ENCODE measurements at regions of chr12 and their contacts with region 1.

Region 1: GRCh38 chr12:3777206-3777809 is 24.4 kb upstream of the CRACR2A start:
- DNase-seq: peak; percentile 61
- H3K4me3 ChIP-seq: no peak overlapping the region
- H3K27ac ChIP-seq: no peak overlapping the region
- H3K4me1 ChIP-seq: no peaks in the 10 kb centered on the region
- H3K27me3 ChIP-seq: peaks cover 12% of the 10 kb centered on the region; the same call in 1 of the 2 replicates
- CTCF ChIP-seq: peak; percentile 81
- EP300 ChIP-seq: no peak
- RAD21 ChIP-seq: peak; percentile 85

Region 2: DNA sequence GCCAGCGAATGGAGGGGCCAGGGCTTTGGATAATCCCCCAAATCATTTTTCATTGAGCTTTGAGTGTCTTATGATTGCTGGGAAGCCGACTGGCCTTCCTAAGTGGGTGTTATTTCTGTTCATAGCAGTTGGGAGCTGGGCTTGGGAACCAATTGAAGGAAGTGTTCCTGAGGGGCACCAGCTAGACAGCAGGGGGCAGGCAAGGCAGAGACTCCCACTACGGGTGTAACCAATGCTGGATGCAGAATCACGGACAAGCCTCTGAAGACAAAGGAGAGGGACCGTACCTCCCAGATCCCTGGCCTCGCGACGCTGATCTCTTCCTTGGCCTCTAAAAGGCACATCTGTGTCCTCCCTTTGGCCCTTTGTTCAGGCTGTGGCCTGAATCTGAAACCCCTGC is 435.3 kb before region 1 on chr12:
- CTCF ChIA-PET with region 1: interaction called, 19 read pairs
- POLR2A ChIA-PET with region 1: no interaction called
- DNase-seq: peak; percentile 82
- H3K4me3 ChIP-seq: peak overlapping the region in 1 of 2 experiments; percentile 32; a peak in 1 of 4 replicates
- H3K27ac ChIP-seq: no peak overlapping the region
- H3K4me1 ChIP-seq: peaks cover 0 to 2% of the 10 kb centered on the region in 2 experiments; a peak in 1 of 4 replicates
- H3K27me3 ChIP-seq: peaks cover 17% of the 10 kb centered on the region; the same call in 1 of the 2 replicates
- CTCF ChIP-seq: peak; percentile 48
- EP300 ChIP-seq: no peak
- RAD21 ChIP-seq: peak; percentile 71

Region 3: DNA sequence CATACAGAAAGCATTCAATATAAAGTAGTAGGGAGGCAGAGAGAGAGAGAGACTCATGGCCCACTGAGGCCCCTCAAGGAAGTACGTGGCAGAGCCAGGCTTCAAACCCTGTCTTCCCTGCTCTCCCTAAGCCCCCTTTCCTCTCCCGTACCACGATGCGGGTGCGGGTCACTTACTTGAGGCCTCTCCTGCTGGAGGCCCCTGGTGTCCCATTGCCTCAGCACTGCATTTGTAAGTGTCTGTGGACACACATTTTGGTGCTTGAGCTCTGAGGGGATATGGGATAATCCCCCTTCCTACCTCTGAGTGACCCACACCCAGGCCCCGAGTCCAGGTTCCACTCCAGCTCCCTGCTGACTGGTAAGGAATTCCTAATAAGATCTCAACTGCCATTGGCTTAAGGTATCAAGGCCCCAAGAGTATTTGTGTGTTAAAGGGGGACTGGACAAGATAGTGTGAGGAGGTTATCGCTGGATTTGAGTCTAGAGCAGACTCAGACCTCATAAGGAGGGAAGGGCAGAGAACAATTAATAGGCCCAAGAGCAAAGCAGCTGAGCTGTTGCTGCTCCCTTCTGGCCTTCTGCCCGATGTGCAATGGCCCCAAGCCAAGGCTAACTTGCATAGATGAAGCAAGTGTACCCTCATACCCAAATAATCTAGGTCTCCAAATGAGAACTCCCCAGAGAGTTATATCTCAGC is 96.3 kb before region 1 on chr12:
- CTCF ChIA-PET with region 1: interaction called, 12 read pairs
- POLR2A ChIA-PET with region 1: no interaction called
- DNase-seq: peak; percentile 51
- H3K4me3 ChIP-seq: no peak overlapping the region
- H3K27ac ChIP-seq: no peak overlapping the region
- H3K4me1 ChIP-seq: peaks cover 0 to 29% of the 10 kb centered on the region in 2 experiments; a peak in 2 of 4 replicates
- H3K27me3 ChIP-seq: no peaks in the 10 kb centered on the region; the same call in 1 of the 2 replicates
- CTCF ChIP-seq: peak; percentile 42
- EP300 ChIP-seq: no peak
- RAD21 ChIP-seq: peak; percentile 72

Region 4: GRCh38 chr12:3752741-3753486 is 24.4 kb before region 1 on chr12 and contains the start of gene CRACR2A:
- CTCF ChIA-PET with region 1: interaction called, 11 read pairs
- POLR2A ChIA-PET with region 1: no interaction called
- DNase-seq: peak; percentile 90
- H3K4me3 ChIP-seq: peak within 1 kb of the TSS; percentile 30 to 32; a peak in 3 of 4 replicates
- H3K27ac ChIP-seq: no peak within 1 kb of the TSS
- H3K4me1 ChIP-seq: peaks cover 0 to 2% of the 10 kb centered on the region in 2 experiments; a peak in 1 of 4 replicates
- H3K27me3 ChIP-seq: no peaks in the 10 kb centered on the region
- CTCF ChIP-seq: peak; percentile 33; the same call in 1 of the 2 replicates
- EP300 ChIP-seq: no peak
- RAD21 ChIP-seq: peak; percentile 28; the same call in 1 of the 2 replicates
- polyA plus RNA-seq, gene CRACR2A: 0.05 and 0.12 TPM in 2 replicates

Region 5: DNA sequence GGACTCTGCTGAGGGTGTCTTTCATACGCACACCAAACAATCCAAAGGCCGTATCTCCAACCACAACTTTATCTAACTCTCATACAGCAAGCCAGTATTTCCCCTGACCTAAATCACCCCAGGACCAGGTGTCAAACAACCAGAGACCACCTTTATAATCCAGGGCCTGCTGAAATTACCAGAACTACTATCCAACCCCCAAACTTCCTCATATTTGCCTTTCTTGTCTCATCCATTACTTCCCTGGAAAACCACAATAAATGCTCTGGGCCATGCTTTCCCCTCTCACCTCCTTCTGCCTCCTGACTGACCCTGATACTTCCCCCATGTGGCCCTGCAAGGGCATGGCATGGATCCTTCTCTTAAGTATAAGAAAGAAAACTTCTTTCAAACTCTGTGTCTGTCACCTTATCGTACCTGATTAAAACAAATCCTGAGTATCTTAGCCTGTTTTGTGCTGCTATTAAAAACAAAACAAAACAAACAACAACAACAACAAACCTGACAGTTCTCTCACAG is 20.3 kb after region 1 on chr12:
- CTCF ChIA-PET with region 1: interaction called, 10 read pairs
- POLR2A ChIA-PET with region 1: no interaction called
- DNase-seq: no peak
- H3K4me3 ChIP-seq: no peak overlapping the region
- H3K27ac ChIP-seq: no peak overlapping the region
- H3K4me1 ChIP-seq: peaks cover 0 to 3% of the 10 kb centered on the region in 2 experiments; a peak in 1 of 4 replicates
- H3K27me3 ChIP-seq: no peaks in the 10 kb centered on the region
- CTCF ChIP-seq: no peak
- EP300 ChIP-seq: no peak
- RAD21 ChIP-seq: no peak

Region 6: DNA sequence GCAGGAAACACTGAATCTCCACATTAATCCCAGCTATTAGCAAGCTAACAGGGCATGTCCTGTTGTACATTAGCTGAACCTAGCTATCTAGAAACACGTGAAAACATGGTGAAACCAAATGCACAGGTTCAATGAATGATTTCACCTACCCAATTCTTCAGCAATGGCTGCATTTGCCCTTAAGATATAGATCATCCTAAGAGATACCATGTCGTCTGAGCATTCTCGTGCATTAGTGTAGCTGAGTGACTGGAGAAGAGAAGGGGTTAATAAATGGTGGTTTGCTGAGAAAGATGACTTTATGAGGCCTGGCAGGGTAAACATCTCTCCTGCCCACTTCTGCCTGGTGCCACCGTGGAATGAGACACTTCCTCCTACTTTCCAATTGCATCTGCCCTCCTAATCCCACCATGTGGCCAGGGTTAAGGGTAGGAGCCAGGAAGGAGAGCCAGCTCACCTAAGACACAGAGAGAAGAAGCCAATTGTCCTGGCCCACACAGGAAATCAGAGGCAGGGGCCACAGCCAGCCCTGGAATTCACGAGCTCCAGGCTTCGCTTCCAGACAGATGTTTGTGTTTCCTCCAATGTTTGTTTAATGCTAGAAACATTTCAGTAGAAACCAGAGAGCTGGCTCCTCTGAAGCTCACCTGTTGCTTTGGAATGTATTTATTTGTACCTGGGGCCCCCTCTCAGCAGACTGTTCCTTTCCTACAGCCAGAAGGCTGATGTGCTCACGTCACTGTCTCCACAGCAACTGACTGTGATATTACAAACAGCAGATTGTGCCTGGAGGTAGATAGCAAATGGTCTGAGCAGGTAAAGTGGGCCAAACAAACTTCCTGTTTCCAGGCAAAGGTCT is 221.9 kb after region 1 on chr12:
- CTCF ChIA-PET with region 1: no interaction called
- POLR2A ChIA-PET with region 1: no interaction called
- DNase-seq: no peak
- H3K4me3 ChIP-seq: no peak overlapping the region
- H3K27ac ChIP-seq: no peak overlapping the region
- H3K4me1 ChIP-seq: no peaks in the 10 kb centered on the region
- H3K27me3 ChIP-seq: peaks cover 40% of the 10 kb centered on the region; the same call in 1 of the 2 replicates
- CTCF ChIP-seq: no peak
- EP300 ChIP-seq: no peak
- RAD21 ChIP-seq: no peak

Measured in SK-N-SH (cell line).